Activated CD8-positive, alpha-beta T cell treated with anti-CD3 and anti-CD28 coated beads, Interleukin-2, amount 10 ng/mL, durations not matched to agents 7 days and 5 days (primary cell): ENCODE measurements at regions of chr2 and their contacts with region 1.

Region 1: GRCh38 chr2:196263181-196263747 is 91.9 kb upstream of the STK17B start:
- DNase-seq: peak; percentile 74
- ATAC-seq: peak; percentile 73
- H3K4me3 Mint-ChIP-seq: peak overlapping the region; percentile 79
- H3K27ac Mint-ChIP-seq: peak overlapping the region; percentile 92
- H3K4me1 Mint-ChIP-seq: peaks cover 84% of the 10 kb centered on the region
- H3K27me3 Mint-ChIP-seq: no peaks in the 10 kb centered on the region

Region 2: DNA sequence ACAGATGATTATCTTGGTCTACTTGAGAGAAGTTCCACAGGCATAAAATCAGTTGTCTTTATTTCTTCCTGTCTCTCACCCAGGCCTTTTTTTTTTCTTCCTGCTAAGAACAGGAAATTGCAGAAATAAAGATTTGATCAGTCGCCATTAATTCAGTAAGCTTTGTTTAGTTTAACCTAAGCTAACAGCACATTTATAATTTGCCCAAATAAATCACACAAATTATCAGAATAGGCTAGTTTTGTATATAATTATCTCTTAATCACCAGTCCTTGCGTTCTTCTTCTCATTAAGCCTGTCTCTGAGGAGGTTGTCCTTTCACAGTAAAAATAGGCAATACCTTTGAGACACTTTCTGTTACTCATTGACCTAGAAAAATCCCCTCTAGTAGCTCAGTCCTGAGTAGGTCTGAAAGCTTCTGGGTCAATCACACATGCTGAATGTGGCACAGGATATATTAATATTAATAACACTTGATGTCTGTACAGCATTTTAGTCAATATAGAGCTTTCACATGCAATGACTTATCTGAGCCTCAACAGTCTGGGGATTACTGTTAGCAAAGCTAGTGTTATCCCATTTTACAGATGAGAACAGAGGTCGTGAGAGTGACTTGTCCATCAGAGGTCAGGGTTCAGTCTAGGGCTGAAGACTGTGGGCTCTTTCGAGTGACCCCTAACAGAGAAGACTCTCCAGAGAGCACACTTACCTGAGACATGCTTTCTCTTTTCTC is 80.7 kb before region 1 on chr2:
- CTCF ChIA-PET with region 1: interaction called, 11 read pairs
- POLR2A ChIA-PET with region 1: interaction called, 275 read pairs
- DNase-seq: no peak
- ATAC-seq: peak; percentile 13
- H3K4me3 Mint-ChIP-seq: peak overlapping the region; percentile 62
- H3K27ac Mint-ChIP-seq: peak overlapping the region; percentile 95
- H3K4me1 Mint-ChIP-seq: peaks cover 89% of the 10 kb centered on the region
- H3K27me3 Mint-ChIP-seq: no peaks in the 10 kb centered on the region

Region 3: GRCh38 chr2:196213252-196213980 is 49.8 kb before region 1 on chr2:
- CTCF ChIA-PET with region 1: interaction called, 4 read pairs
- POLR2A ChIA-PET with region 1: interaction called, 24 read pairs
- DNase-seq: no peak
- ATAC-seq: no peak
- H3K4me3 Mint-ChIP-seq: no peak overlapping the region
- H3K27ac Mint-ChIP-seq: no peak overlapping the region
- H3K4me1 Mint-ChIP-seq: peaks cover 78% of the 10 kb centered on the region
- H3K27me3 Mint-ChIP-seq: no peaks in the 10 kb centered on the region

Region 4: DNA sequence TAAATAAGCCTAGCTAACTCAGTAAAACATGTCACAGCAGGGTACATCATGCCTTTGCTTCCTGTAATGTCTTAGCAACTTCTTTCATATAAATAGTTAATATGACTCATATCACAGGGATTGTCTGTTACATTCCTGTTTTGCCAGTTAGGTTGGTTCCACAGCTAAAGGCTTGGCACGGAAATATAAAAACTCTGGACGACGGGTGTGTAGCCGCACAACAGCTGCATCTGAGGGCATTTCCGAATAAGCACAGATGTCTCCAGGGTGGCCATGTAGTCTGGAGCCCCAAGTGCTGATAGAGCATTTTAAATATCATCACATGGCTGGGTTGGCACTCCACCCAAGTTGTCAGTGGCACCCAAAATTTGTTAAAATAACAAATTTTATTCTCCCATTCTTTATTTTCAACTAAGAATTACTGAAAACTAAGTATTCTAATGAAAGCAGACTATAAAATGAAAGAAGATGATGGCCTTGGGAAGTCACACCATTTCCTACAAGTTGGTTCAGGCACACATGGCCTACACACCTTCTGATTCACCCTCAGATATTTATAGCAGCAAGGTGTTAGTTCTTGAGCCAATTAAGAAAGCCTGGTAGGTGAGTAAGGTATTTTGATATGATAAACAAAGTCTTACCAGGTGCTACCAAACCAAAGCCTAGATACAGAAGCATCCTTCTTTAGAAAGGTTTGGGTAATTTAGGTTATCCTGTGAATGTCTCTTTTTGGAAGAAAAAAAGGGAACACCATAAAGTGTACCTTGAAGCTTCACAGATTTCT is 30.1 kb before region 1 on chr2:
- CTCF ChIA-PET with region 1: interaction called, 25 read pairs
- POLR2A ChIA-PET with region 1: interaction called, 261 read pairs
- DNase-seq: no peak
- ATAC-seq: no peak
- H3K4me3 Mint-ChIP-seq: peak overlapping the region; percentile 30
- H3K27ac Mint-ChIP-seq: peak overlapping the region; percentile 95
- H3K4me1 Mint-ChIP-seq: peaks cover 93% of the 10 kb centered on the region
- H3K27me3 Mint-ChIP-seq: no peaks in the 10 kb centered on the region

Region 5: GRCh38 chr2:196249860-196250259 is 13.4 kb before region 1 on chr2:
- CTCF ChIA-PET with region 1: interaction called, 65 read pairs
- POLR2A ChIA-PET with region 1: interaction called, 261 read pairs
- DNase-seq: no peak
- ATAC-seq: peak; percentile 64
- H3K4me3 Mint-ChIP-seq: no peak overlapping the region
- H3K27ac Mint-ChIP-seq: peak overlapping the region; percentile 65
- H3K4me1 Mint-ChIP-seq: peaks cover 77% of the 10 kb centered on the region
- H3K27me3 Mint-ChIP-seq: no peaks in the 10 kb centered on the region